ENCODE measurements at regions of chr7 and their contacts with region 1.

Region 1: DNA sequence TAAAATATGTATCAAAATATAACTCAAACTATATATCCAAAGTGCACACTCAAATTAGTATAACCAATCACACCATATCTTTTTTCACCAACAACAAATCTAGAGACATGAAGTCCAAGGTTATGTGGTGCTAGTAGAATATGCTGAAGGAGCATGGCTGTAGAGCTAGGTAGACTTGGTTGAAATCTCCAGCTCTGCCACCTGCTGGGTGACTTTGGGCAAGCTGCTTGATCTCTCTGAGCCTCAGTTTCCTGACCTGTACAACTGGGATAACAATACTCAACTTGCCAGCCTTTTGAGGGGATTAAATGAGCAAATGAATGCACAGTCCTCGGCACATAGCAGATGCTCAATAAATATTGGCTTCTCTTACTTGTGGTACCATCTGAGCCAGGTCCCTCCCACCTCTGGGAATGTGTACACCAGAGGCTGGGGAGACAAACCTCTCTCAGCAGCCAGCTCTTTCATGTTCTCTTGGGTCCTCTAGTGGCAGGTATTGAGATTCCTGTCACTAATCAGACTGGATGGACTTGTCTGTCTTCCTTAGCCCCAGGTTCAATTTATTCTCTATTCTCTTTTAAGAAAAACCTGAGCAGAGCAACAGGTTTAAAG is 94.2 kb upstream of the PDE1C start:
- DNase-seq: peak; percentile 85
- ATAC-seq: peak; percentile 53
- H3K4me3 ChIP-seq: no peak overlapping the region
- H3K27ac ChIP-seq: peak overlapping the region; percentile 87; the same call in 1 of the 2 replicates
- H3K4me1 ChIP-seq: peaks cover 39% of the 10 kb centered on the region
- H3K27me3 ChIP-seq: no peaks in the 10 kb centered on the region
- CTCF ChIP-seq: peak; percentile 84

Region 2: GRCh38 chr7:31896925-31897324 is 267.5 kb before region 1 on chr7:
- CTCF ChIA-PET with region 1: no interaction called
- POLR2A ChIA-PET with region 1: no interaction called
- intact Hi-C with region 1: loop called (anchors 2 kb)
- DNase-seq: no peak
- ATAC-seq: no peak
- H3K4me3 ChIP-seq: no peak overlapping the region
- H3K27ac ChIP-seq: no peak overlapping the region
- H3K4me1 ChIP-seq: peaks cover 15% of the 10 kb centered on the region
- H3K27me3 ChIP-seq: no peaks in the 10 kb centered on the region
- CTCF ChIP-seq: no peak

Region 3: DNA sequence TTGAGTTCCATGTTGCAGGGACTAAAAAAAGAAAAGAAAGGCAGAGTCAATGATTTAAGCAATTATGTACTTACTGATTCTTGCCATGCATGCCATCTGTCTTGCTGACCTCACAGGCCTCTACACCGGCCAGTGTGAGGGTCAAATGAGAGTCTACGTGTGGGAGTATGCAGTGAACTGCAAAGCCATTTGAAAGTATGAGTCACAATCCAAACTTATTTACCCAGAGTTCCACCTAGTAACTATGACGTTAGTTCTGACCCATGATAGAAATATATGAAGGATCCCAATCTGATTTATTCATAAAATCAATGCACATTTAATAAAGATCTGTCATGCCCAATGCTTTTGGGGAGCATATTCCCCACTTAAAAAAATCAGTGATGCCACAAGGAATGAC is 120.7 kb before region 1 on chr7:
- CTCF ChIA-PET with region 1: no interaction called
- POLR2A ChIA-PET with region 1: no interaction called
- intact Hi-C with region 1: loop called (anchors 2 kb)
- DNase-seq: peak; percentile 83
- ATAC-seq: peak; percentile 72
- H3K4me3 ChIP-seq: peak overlapping the region; percentile 8; the same call in 1 of the 2 replicates
- H3K27ac ChIP-seq: peak overlapping the region; percentile 93
- H3K4me1 ChIP-seq: peaks cover 66% of the 10 kb centered on the region
- H3K27me3 ChIP-seq: no peaks in the 10 kb centered on the region
- CTCF ChIP-seq: no peak

Region 4: DNA sequence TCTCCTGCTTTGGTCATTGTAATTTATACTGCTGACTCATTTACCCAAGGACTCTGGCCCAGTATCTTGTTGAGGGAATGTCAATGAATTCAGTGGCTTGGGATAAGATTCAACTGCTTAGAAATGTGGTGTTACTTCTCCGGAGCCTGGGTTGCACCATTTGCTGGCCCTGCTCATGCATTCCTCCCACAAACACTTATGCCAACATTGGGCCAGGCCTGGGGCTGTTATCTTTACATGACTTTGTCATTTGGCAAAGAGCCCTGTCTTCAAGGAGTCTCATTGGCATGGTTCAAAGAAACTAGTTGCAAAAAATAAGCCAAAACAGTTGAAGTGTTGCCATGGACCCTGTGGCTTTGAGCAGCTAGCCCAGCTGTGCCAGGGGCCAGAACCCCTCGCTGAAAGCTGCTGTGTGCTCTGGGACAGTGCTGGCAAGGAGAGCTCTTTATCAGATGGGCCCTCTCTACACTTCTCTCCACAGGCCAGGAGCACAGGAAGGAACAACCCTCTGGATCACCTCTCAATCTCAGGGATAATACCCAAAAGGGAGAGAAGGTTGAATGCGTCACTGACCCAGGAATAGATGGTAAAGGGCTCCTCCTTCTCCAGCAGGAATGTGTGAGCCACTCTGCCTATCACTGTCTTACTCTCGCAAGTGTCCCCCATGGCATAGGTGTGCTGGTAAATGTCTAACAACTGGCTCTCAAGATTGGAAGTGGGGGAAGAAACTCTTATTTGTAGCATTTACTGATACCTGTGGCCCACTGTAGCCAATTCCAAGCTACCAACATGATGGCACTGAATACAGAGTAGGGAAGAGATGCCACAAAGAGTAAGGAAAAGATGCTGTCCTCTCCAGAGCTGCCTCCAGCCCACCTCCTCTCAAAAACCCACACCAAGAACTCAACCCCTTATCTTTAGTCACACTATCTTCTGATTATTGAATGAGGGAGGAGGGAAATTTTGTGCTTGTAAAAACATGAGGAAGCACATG is 70.7 kb before region 1 on chr7:
- CTCF ChIA-PET with region 1: no interaction called
- POLR2A ChIA-PET with region 1: no interaction called
- intact Hi-C with region 1: loop called (anchors 2 kb)
- DNase-seq: peak; percentile 96
- ATAC-seq: peak; percentile 81
- H3K4me3 ChIP-seq: no peak overlapping the region
- H3K27ac ChIP-seq: peak overlapping the region; percentile 84
- H3K4me1 ChIP-seq: peaks cover 40% of the 10 kb centered on the region
- H3K27me3 ChIP-seq: no peaks in the 10 kb centered on the region
- CTCF ChIP-seq: no peak

Region 5: DNA sequence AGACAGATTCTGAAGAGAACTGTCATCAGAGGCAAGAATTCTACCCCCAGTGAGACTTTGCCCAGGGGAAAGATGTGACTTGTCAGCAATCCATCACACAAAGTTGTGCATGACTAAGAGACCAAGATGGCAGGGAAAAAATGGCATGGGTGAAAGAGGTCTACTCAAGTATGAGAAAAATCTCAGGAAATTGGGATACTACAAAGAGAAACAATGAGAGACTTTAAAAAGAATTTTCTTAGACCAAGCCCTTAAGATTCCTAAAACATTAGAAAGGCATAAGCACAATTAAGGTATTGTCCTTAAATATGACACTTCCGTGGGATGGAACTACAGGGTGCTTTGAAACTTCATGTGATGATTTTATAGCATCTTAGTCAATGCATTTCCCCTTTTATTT is 48.6 kb before region 1 on chr7:
- CTCF ChIA-PET with region 1: interaction called, 3 read pairs
- POLR2A ChIA-PET with region 1: interaction called, 5 read pairs
- intact Hi-C with region 1: loop called (anchors 2 kb)
- DNase-seq: peak; percentile 81
- ATAC-seq: peak; percentile 90
- H3K4me3 ChIP-seq: no peak overlapping the region
- H3K27ac ChIP-seq: peak overlapping the region; percentile 20; the same call in 1 of the 2 replicates
- H3K4me1 ChIP-seq: peaks cover 17% of the 10 kb centered on the region; the same call in 1 of the 2 replicates
- H3K27me3 ChIP-seq: no peaks in the 10 kb centered on the region
- CTCF ChIP-seq: no peak